ENCODE measurements at regions of chr17 and their contacts with region 1.

Region 1: GRCh38 chr17:34420254-34420766 is 57.3 kb upstream of the CCL1 start:
- DNase-seq: peak; percentile 26 to 79 (median 67)
- ATAC-seq: peak; percentile 64
- H3K4me3 ChIP-seq: no peak overlapping the region
- H3K4me3 Mint-ChIP-seq: no peak overlapping the region
- H3K27ac ChIP-seq: no peak overlapping the region
- H3K27ac Mint-ChIP-seq: no peak overlapping the region
- H3K4me1 ChIP-seq: no peaks in the 10 kb centered on the region
- H3K4me1 Mint-ChIP-seq: no peaks in the 10 kb centered on the region
- H3K27me3 ChIP-seq: peaks cover 0 to 4% of the 10 kb centered on the region in 2 experiments
- H3K27me3 Mint-ChIP-seq: peaks cover 40% of the 10 kb centered on the region
- CTCF ChIP-seq: peak; percentile 96

Region 2: GRCh38 chr17:34434052-34434451 is 13.7 kb after region 1 on chr17:
- CTCF ChIA-PET with region 1: interaction called, 10 read pairs
- POLR2A ChIA-PET with region 1: no interaction called
- intact Hi-C with region 1: no loop called
- DNase-seq: peak in 1 of 9 experiments; percentile 10
- ATAC-seq: no peak
- H3K4me3 ChIP-seq: no peak overlapping the region
- H3K4me3 Mint-ChIP-seq: no peak overlapping the region
- H3K27ac ChIP-seq: no peak overlapping the region
- H3K27ac Mint-ChIP-seq: no peak overlapping the region
- H3K4me1 ChIP-seq: no peaks in the 10 kb centered on the region
- H3K4me1 Mint-ChIP-seq: no peaks in the 10 kb centered on the region
- H3K27me3 ChIP-seq: no peaks in the 10 kb centered on the region
- H3K27me3 Mint-ChIP-seq: peaks cover 18% of the 10 kb centered on the region
- CTCF ChIP-seq: no peak

Region 3: DNA sequence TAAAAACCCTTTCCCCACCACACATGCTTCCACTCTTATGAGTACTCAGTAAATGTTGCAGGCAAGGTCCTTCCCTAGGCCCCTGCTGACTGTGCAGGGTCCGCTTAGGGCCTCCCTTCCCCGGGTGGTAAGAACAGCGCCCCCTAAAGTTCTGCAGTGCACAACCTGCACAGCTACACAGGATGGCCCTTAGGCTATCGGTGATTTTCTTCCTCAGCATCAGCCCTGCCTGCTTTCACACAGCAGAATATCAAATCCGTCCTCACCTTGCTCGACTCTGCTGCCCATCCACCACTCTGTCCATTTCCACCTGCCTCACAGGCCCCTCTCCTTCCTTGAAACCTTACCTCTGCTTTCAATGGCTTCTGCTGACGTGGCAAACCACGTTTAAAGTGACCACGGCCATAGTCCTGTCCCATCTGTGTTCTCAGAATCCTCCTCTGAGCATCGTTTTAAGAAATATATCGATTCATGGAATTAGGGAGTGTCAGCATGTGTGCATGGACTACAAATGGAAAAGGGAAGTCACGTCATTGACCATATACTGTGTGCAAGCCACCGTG is 107.7 kb after region 1 on chr17:
- CTCF ChIA-PET with region 1: no interaction called
- POLR2A ChIA-PET with region 1: no interaction called
- intact Hi-C with region 1: no loop called
- DNase-seq: no peak
- ATAC-seq: no peak
- H3K4me3 ChIP-seq: no peak overlapping the region
- H3K4me3 Mint-ChIP-seq: no peak overlapping the region
- H3K27ac ChIP-seq: no peak overlapping the region
- H3K27ac Mint-ChIP-seq: no peak overlapping the region
- H3K4me1 ChIP-seq: no peaks in the 10 kb centered on the region
- H3K4me1 Mint-ChIP-seq: no peaks in the 10 kb centered on the region
- H3K27me3 ChIP-seq: peaks cover 0 to 6% of the 10 kb centered on the region in 2 experiments
- H3K27me3 Mint-ChIP-seq: peaks cover 35% of the 10 kb centered on the region
- CTCF ChIP-seq: no peak

Measured in CD8-positive, alpha-beta T cell (primary cell).